ENCODE measurements at regions of chr21 and their contacts with region 1.

Region 1: DNA sequence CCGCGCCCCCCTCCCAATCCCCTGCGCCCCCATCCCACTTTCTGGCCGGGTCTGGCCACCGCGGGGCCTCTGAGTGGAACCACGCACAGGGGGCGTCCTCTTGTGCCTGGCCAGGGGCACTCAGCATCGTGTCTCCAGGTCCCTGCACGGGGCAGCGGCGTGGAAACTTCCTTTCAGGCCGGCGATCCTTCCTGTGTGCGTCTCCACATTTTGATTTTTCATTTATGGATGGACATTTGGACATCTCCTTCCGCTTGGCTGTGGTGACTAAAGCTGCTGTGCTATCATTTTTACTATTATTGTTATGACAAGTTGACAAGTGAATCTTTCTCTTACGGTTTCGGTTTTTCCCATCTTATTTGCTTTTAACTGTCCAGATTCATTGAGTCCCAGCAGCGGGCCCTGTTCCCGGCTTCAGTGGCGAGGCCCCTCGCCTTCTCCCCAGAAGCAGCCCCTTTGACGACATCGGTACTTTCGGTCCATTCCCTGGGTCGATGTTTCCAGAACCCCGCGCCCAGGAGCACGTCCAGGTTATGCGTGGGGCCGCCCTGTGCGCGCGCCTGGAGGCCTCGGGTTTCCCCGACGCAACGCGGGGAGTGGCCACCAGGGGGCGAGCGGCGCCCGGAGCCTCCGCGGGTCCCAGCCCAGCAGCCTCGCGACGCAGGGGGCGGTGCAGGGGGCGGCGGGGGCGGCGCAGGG is 12.4 kb upstream of the SLC19A1 start:
- DNase-seq: peak; percentile 48
- H3K4me3 ChIP-seq: peak overlapping the region; percentile 51 to 64 (median 56)
- H3K27ac ChIP-seq: no peak overlapping the region
- H3K4me1 ChIP-seq: peaks cover 13% of the 10 kb centered on the region
- H3K27me3 ChIP-seq: no peaks in the 10 kb centered on the region
- CTCF ChIP-seq: peak; percentile 52 to 73

Region 2: DNA sequence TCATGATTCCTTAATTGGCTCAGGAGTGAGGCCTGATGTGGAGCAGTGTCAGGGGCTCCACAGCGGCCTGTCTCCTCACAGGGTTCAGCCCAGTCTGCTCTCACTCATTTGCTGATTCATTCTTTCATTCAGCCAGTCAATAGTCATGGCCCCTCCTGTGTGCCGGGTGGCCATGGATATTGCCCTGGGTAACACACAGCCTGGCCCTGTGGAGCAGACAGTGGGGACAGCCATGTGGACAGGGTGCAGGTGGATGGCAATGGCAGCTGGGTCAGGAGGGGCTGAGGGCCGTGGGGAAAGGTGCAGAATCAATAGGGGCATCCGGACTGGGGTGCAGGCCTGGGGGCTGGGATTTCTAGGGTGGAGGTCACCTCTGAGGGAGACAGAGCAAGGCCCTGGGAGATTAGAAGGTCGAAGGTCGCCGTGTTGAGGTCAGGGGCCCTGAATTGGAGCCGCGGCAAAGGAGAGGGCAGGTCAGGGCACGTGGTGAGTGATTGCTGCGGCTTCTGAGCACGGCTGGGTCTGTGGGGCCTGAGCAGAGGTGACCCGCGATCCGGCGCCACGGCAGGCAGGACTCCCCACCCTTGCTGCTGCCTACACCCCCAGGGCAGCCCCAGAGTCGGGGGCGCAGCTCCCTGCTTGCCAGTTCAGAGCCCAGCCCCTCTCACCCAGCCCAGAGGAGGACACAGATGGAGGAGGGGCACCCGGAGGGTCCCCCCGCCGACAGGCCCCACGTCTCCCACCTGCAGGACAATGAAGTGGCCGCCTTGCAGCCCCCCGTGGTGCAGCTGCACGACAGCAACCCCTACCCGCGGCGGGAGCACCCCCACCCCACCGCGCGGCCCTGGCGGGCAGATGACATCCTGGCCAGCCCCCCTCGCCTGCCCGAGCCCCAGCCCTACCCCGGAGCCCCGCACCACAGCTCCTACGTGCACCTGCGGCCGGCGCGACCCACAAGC is 45.7 kb before region 1 on chr21:
- CTCF ChIA-PET with region 1: no interaction called
- dilution Hi-C with region 1: no loop called
- in situ Hi-C with region 1: no loop called
- intact Hi-C with region 1: no loop called
- DNase-seq: no peak
- H3K4me3 ChIP-seq: no peak overlapping the region
- H3K27ac ChIP-seq: no peak overlapping the region
- H3K4me1 ChIP-seq: no peaks in the 10 kb centered on the region
- H3K27me3 ChIP-seq: no peaks in the 10 kb centered on the region
- CTCF ChIP-seq: no peak

Region 3: DNA sequence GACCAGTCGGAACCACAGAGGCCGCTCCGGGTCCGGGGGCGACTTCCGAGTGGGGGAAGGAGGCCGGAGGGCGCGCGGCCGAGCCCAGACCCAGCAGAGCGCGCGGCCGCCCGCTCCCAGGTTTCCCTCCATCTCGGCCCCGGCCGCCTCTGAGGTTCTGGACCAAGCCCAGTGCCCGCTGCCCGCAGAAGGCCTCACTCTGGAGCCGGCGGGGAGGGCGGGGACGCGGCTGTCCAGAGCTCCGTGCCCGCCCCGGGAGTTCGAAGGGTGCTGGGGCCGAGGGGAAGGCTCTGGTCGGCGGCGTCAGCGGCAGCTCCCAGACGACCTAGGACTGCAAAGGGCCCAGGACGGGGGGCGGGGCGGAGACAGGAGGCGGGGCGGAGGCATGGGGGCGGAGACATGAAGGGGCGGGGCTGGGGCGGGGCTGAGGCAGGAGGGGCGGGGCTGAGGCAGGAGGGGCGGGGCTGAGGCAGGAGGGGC is 35.7 kb after region 1 on chr21:
- CTCF ChIA-PET with region 1: no interaction called
- dilution Hi-C with region 1: no loop called
- in situ Hi-C with region 1: no loop called
- intact Hi-C with region 1: loop called (anchors 5 kb)
- DNase-seq: peak; percentile 7
- H3K4me3 ChIP-seq: peak overlapping the region in 2 of 3 experiments; percentile 24 to 26
- H3K27ac ChIP-seq: no peak overlapping the region
- H3K4me1 ChIP-seq: no peaks in the 10 kb centered on the region
- H3K27me3 ChIP-seq: peaks cover 5% of the 10 kb centered on the region
- CTCF ChIP-seq: no peak

Region 4: GRCh38 chr21:45607021-45607908 is 52.6 kb after region 1 on chr21:
- CTCF ChIA-PET with region 1: no interaction called
- dilution Hi-C with region 1: no loop called
- in situ Hi-C with region 1: no loop called
- intact Hi-C with region 1: no loop called
- DNase-seq: no peak
- H3K4me3 ChIP-seq: no peak overlapping the region
- H3K27ac ChIP-seq: no peak overlapping the region
- H3K4me1 ChIP-seq: peaks cover 6% of the 10 kb centered on the region
- H3K27me3 ChIP-seq: no peaks in the 10 kb centered on the region
- CTCF ChIP-seq: no peak

Region 5: GRCh38 chr21:45724345-45724961 is 169.8 kb after region 1 on chr21:
- CTCF ChIA-PET with region 1: no interaction called
- dilution Hi-C with region 1: no loop called
- in situ Hi-C with region 1: no loop called
- intact Hi-C with region 1: no loop called
- DNase-seq: no peak
- H3K4me3 ChIP-seq: no peak overlapping the region
- H3K27ac ChIP-seq: no peak overlapping the region
- H3K4me1 ChIP-seq: no peaks in the 10 kb centered on the region
- H3K27me3 ChIP-seq: no peaks in the 10 kb centered on the region
- CTCF ChIP-seq: no peak

Measured in mammary epithelial cell (primary cell).